ENCODE measurements at regions of chr13 and their contacts with region 1.

Region 1: DNA sequence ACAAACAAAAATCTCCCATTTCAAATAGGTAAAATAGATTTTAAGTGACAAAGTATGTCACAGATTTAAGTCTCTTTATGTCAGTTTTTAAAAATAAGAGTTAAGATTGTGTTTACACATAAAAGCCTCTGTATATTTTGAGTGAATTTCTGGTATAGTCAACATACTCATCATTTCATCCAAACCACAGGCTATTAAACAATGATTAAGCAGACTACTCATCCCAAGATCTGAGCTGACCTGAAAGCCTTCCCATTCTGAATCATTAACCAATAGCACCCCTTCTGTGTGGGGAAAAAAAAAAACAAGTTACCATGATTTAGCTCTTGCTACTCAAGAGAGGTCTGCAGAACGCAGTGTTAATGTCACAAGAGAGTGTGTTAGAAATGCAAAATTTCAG is 284.4 kb upstream of the NBEA start:
- DNase-seq: no peak
- ATAC-seq: no peak
- H3K4me3 ChIP-seq: no peak overlapping the region
- H3K27ac ChIP-seq: no peak overlapping the region
- H3K4me1 ChIP-seq: peaks cover 0 to 22% (median 6%) of the 10 kb centered on the region in 12 donors
- H3K27me3 ChIP-seq: no peaks in the 10 kb centered on the region
- CTCF ChIP-seq: no peak
- POLR2A ChIP-seq: no peak

Region 2: GRCh38 chr13:34941835-34942731 is 284.4 kb after region 1 on chr13 and contains the start of gene NBEA:
- intact Hi-C with region 1: loop called in 1 of 10 experiments (anchors 10 kb)
- DNase-seq: peak; percentile 80 to 91 (median 86)
- ATAC-seq: peak; percentile 46 to 91 (median 88)
- H3K4me3 ChIP-seq: peak within 1 kb of the TSS; percentile 71 to 90 (median 84)
- H3K27ac ChIP-seq: peak within 1 kb of the TSS in 11 of 12 donors; percentile 65 to 88 (median 75)
- H3K4me1 ChIP-seq: peaks cover 0 to 34% (median 19%) of the 10 kb centered on the region in 12 donors
- H3K27me3 ChIP-seq: no peaks in the 10 kb centered on the region
- CTCF ChIP-seq: peak; percentile 25 to 68 (median 47)
- POLR2A ChIP-seq: peak in 1 of 2 donors; percentile 22
- total RNA-seq, gene NBEA: 18.8 to 39.2 (median 25.0) TPM